Astrocyte of the spinal cord (primary cell): ENCODE measurements at regions of chr5 and their contacts with region 1.

Region 1: DNA sequence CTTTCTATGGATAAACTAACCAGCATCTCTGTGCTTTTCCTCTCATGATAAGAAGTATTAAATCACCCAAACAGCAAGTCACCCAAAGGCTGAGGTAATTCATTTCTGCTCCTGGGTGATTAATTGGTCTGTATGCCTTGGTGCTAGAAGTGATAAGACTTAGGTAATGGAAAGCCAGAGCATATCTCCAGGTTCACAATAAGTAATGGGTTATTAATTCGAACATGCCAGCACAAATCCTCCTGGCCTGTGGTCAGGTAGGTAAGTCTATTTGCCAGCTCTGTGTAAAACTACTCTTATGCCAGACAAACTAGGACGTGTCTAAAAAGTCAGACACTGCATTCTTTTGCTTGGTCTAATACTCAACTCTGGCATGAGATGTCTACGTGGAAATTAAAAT is 11.2 kb upstream of the ENC1 start:
- DNase-seq: no peak
- H3K4me3 ChIP-seq: no peak overlapping the region
- CTCF ChIP-seq: no peak

Region 2: GRCh38 chr5:73917433-73917832 is 734.3 kb before region 1 on chr5:
- in situ Hi-C with region 1: loop called (anchors 10 kb)
- DNase-seq: peak; percentile 51
- H3K4me3 ChIP-seq: no peak overlapping the region
- CTCF ChIP-seq: no peak

Region 3: GRCh38 chr5:74556631-74557595 is 94.8 kb before region 1 on chr5:
- in situ Hi-C with region 1: no loop called
- DNase-seq: no peak
- H3K4me3 ChIP-seq: no peak overlapping the region
- CTCF ChIP-seq: no peak

Region 4: DNA sequence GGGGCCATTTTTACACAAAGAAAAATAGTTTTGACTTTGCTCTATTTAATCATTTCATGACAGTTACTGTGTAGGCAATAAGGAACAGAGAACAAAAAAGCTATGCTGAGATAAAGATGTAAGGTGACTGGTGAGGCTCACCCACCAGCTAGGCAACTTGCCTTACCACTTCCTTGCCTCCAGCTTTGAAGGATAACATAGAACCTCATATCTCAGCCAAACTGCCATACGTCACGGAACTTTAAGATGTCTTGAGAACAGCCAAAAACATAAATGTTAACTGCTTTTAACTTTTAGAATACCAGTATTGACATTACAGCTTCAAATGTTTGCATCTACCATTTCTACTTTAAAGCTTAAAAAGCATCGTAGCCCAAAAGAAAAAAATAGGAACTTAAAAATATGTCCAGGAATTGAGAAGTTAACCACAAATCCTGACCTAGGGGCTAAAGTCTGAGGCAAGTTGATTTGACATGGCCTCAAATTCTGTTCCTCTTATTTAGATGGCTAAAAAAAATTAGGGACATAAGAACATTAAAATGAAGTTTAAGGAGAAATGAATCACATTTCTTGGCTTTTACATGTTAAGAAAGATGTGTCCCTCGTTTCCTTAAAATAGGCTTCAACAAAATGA is 408.3 kb after region 1 on chr5:
- in situ Hi-C with region 1: no loop called
- DNase-seq: no peak
- H3K4me3 ChIP-seq: no peak overlapping the region
- CTCF ChIP-seq: no peak